Activated CD4-positive, alpha-beta T cell treated with anti-CD3 and anti-CD28 coated beads, Interleukin-2, amount 10 ng/mL, durations not matched to agents 24 days and 14 days (primary cell): ENCODE measurements at regions of chr14 and their contacts with region 1.

Region 1: GRCh38 chr14:93115069-93115820 is 480 bp downstream of the ITPK1 start:
- DNase-seq: peak; percentile 96
- H3K4me3 Mint-ChIP-seq: peak overlapping the region; percentile 90
- H3K27ac Mint-ChIP-seq: peak overlapping the region; percentile 62
- H3K4me1 Mint-ChIP-seq: peaks cover 26% of the 10 kb centered on the region
- H3K27me3 Mint-ChIP-seq: no peaks in the 10 kb centered on the region

Region 2: DNA sequence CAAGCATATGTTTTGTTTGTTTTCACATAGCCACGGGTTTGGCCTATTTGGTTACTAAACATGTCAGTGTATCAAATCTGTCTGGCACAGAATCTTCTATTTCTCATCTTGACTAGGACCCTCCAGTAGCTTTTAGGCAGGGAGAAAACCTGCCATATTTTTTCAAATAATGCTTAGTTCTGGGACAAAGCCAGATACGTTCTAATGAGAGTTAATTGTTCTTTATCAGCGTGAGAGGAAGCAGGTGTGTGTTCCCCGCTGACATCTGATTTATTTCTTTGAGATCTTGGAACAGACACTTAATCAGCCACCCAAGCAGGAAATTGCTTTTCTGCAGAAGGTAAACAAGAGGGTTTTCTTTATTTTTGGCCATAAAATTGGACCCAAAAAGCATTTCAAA is 266.4 kb before region 1 on chr14:
- intact Hi-C with region 1: no loop called
- DNase-seq: no peak
- H3K4me3 Mint-ChIP-seq: no peak overlapping the region
- H3K27ac Mint-ChIP-seq: no peak overlapping the region
- H3K4me1 Mint-ChIP-seq: peaks cover 27% of the 10 kb centered on the region
- H3K27me3 Mint-ChIP-seq: peaks cover 4% of the 10 kb centered on the region

Region 3: GRCh38 chr14:92951912-92952471 is 163.3 kb before region 1 on chr14:
- intact Hi-C with region 1: loop called (anchors 2 kb)
- DNase-seq: peak; percentile 94
- H3K4me3 Mint-ChIP-seq: no peak overlapping the region
- H3K27ac Mint-ChIP-seq: no peak overlapping the region
- H3K4me1 Mint-ChIP-seq: peaks cover 5% of the 10 kb centered on the region
- H3K27me3 Mint-ChIP-seq: no peaks in the 10 kb centered on the region

Region 4: GRCh38 chr14:93103392-93104080 is 11.7 kb before region 1 on chr14:
- intact Hi-C with region 1: loop called (anchors 1 kb)
- DNase-seq: peak; percentile 95
- H3K4me3 Mint-ChIP-seq: peak overlapping the region; percentile 85
- H3K27ac Mint-ChIP-seq: peak overlapping the region; percentile 92
- H3K4me1 Mint-ChIP-seq: peaks cover 43% of the 10 kb centered on the region
- H3K27me3 Mint-ChIP-seq: no peaks in the 10 kb centered on the region

Region 5: DNA sequence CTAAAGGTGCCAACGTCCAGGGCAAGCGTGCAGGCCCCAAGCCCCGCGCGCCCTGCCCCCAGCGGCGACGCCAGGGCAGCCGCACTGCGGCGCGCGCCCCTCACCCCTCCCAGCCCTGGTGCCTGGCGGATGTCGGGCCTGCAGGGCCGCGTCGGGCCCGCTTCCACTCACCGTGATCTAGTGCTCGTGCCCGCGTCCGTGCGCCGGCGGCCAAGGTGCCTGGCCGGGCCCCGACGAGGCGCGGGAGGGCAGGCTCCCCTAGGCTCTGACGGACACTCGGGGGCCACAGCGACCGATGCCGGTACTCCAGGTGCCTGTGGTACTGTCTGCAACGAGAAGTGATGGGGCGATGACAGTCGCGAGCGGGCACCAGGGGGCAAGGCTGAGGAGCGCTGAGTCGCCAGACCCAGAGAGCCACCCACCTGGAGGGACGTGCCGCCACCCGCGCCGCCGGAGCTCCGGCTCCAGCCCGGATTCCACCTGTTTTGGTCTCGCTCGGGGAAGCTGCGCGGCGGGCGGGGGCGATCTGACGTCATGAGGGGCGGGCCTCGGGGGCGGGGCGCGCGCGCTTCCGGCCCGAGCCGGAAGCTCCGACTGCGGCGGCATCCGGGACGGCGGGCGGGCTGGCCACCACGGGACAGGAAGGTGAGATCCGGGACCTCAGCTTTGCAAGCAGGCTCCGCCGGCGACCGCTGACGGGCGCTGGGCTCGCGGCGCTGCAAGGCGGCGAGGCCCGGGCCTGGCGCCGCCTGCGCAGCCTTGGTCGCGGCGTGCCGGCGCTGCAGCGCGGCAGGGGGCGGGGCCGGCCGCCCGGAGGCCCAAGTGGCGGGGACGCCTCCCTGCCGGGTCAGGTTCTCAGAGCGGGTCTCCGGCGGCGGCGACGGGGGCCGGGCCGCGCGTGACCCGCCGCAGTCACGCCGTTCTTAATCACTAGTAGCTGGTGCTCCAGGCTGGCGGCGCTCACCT is 69.4 kb after region 1 on chr14 and contains the starts of genes LYSET and MOAP1:
- intact Hi-C with region 1: loop called (anchors 2 kb)
- DNase-seq: peak; percentile 96
- H3K4me3 Mint-ChIP-seq: peak within 1 kb of the TSS; percentile 95
- H3K27ac Mint-ChIP-seq: peak within 1 kb of the TSS; percentile 90
- H3K4me1 Mint-ChIP-seq: peaks cover 27% of the 10 kb centered on the region
- H3K27me3 Mint-ChIP-seq: no peaks in the 10 kb centered on the region
- total RNA-seq, gene LYSET: 14.7 and 18.6 TPM in 2 replicates
- total RNA-seq, gene MOAP1: 16.2 and 17.1 TPM in 2 replicates

Region 6: GRCh38 chr14:93219103-93219726 is 104.0 kb after region 1 on chr14:
- intact Hi-C with region 1: loop called (anchors 1 kb)
- DNase-seq: peak; percentile 83
- H3K4me3 Mint-ChIP-seq: no peak overlapping the region
- H3K27ac Mint-ChIP-seq: no peak overlapping the region
- H3K4me1 Mint-ChIP-seq: peaks cover 2% of the 10 kb centered on the region
- H3K27me3 Mint-ChIP-seq: no peaks in the 10 kb centered on the region